Activated CD4-positive, alpha-beta T cell treated with anti-CD3 and anti-CD28 coated beads, Interleukin-2, amount 10 ng/mL, durations not matched to agents 24 days and 14 days (primary cell): ENCODE measurements at regions of chr3 and their contacts with region 1.

Region 1: GRCh38 chr3:72134989-72135451 is 350.1 kb upstream of the PROK2 start:
- DNase-seq: peak; percentile 66
- H3K4me3 Mint-ChIP-seq: peak overlapping the region; percentile 75
- H3K27ac Mint-ChIP-seq: peak overlapping the region; percentile 96
- H3K4me1 Mint-ChIP-seq: peaks cover 39% of the 10 kb centered on the region
- H3K27me3 Mint-ChIP-seq: no peaks in the 10 kb centered on the region

Region 2: DNA sequence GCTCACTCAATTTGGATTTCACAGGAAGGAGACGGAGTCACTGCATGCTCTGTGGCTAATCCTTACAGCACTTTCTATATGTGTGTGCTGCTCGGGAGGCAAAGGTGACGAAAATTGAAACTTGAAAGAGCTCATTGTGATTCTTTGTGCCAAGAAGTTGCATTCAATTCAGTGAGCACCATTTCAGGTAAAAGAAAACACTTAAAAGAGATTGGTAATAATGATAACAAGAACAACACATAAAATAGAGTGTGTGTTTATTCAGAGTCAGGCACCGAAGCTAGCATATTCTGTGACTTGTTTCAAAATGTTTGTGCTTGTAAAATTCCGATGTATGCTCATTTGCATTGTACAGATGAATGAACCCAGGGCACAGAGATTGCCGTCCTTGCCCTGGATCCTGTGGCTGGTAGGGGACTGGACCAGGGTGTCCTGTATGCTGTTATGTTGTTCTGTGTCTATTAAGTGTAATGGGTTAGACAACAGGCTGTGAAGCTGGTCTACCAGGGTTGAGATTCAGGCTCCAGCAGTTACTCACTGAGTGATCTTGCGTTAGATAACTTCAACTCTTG is 156.8 kb before region 1 on chr3:
- intact Hi-C with region 1: loop called (anchors 1 kb)
- DNase-seq: peak; percentile 76
- H3K4me3 Mint-ChIP-seq: peak overlapping the region; percentile 59
- H3K27ac Mint-ChIP-seq: peak overlapping the region; percentile 88
- H3K4me1 Mint-ChIP-seq: peaks cover 45% of the 10 kb centered on the region
- H3K27me3 Mint-ChIP-seq: no peaks in the 10 kb centered on the region

Region 3: DNA sequence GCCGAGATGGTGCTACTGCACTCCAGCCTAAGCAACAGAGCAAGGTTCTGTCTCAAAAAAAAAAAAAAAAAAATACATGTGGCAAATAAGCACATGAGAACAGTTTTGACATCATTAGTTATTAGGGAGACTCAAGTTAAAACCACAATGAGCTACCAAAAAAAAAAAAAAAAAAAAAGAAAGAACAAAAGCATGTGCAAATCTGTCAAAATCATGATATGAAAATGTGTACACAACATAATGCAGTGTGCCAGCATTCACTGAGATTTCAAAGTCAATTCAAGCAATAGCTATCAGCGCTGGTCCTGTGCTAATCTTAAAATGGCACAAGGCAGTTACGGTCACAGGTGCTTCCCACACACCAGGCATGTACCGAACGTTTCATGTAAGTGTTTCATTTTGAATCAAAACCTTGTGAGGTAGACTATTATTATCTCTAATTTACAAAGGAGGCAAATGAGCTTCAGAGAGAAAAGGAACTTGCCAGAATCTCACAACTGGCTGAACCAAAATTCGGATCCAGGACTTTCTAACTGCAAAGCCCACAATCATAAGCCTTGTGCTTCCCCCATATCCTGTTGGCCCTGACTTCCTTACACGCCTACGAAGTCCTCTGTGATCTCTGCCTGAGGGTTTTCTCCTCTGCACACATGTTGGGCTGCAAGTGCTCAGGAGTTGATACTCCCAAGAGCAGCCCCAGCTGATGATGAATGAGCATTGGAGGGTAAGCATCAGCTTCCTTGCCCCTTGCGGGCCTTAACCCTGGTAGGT is 150.0 kb before region 1 on chr3:
- intact Hi-C with region 1: loop called (anchors 1 kb)
- DNase-seq: peak; percentile 75
- H3K4me3 Mint-ChIP-seq: peak overlapping the region; percentile 74
- H3K27ac Mint-ChIP-seq: peak overlapping the region; percentile 87
- H3K4me1 Mint-ChIP-seq: peaks cover 49% of the 10 kb centered on the region
- H3K27me3 Mint-ChIP-seq: no peaks in the 10 kb centered on the region

Region 4: GRCh38 chr3:72100601-72101187 is 34.3 kb before region 1 on chr3:
- intact Hi-C with region 1: loop called (anchors 2 kb)
- DNase-seq: peak; percentile 98
- H3K4me3 Mint-ChIP-seq: peak overlapping the region; percentile 83
- H3K27ac Mint-ChIP-seq: peak overlapping the region; percentile 89
- H3K4me1 Mint-ChIP-seq: peaks cover 36% of the 10 kb centered on the region
- H3K27me3 Mint-ChIP-seq: no peaks in the 10 kb centered on the region

Region 5: DNA sequence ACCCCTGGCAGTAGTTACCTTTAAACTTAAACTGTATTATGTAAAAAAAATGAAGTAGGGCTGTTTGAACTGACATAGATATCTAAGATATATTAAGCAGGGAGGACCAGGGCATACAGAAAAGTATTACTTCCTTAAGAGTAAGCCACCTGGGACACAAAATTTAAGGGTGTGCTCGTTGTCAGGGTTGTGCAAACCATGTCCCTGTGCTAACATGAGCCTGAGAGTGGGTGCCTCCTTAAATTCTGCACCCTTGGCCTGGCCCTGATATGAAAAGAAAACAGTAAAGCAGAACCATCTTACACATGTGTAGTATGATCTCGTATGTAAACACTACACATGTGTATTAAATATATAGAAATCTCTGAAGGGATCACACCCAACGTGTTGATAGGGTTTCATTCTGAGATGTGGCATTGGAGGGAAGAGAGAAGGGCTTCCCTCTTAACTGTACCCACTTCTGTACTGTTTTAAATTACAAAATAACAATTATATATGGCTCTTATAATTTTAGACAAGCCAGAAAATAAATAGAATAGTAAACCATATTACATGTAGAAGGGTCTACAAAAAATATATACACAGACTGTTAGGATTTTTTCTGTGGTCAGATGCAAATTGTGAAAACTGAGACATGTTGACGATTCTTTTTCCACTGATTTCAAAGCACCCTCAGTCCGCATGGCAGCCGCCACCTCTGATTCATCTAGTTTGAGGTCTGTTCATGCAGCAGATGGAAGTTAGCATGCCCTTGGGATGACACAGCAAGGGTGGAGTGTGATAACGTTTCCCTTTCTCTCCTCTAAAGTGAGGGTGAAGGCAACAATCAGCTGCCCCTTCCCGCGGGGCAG is 50.8 kb after region 1 on chr3:
- intact Hi-C with region 1: loop called (anchors 5 kb)
- DNase-seq: no peak
- H3K4me3 Mint-ChIP-seq: peak overlapping the region; percentile 18
- H3K27ac Mint-ChIP-seq: peak overlapping the region; percentile 21
- H3K4me1 Mint-ChIP-seq: peaks cover 19% of the 10 kb centered on the region
- H3K27me3 Mint-ChIP-seq: peaks cover 5% of the 10 kb centered on the region